Aorta (tissue), 5 donors: ENCODE measurements at regions of chr16 and their contacts with region 1.

Region 1: DNA sequence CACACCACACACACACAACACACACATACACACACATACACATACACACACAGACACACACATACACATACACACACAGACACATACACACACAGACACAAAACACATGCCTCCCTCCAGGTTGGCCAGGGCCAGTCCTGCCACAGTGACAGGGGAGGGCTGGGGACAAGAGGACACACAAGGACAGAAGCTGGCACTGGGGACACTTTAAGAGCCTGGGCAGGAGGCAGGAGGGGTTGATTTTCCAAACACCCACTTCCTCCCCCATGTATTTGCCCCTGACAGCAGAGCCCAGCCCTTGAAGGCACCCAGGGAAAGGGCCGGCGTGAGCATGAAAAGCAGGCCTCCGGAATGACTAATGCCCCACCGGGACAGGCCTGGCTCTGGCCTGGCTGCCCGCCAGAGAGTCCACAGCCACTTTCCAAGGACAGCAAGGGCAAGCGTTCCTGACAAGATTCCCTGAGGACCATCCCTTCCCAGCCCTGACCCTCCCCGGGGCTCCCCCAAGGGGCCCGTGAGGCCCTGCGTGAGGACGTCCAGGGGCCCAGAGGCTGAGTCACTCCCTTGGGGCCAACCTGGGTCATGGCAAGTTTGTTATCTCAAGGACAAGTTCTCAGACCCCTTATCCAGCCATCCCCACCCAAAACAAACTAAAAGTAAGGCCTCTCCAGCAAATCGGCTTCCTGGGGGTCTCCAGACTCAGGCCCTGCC is 235.6 kb downstream of the ZNF423 start:
- DNase-seq: peak; percentile 91 to 95
- ATAC-seq: peak; percentile 86
- H3K4me3 ChIP-seq: no peak overlapping the region
- H3K27ac ChIP-seq: peak overlapping the region; percentile 68 to 86
- H3K4me1 ChIP-seq: peaks cover 0 to 5% of the 10 kb centered on the region in 2 donors
- H3K27me3 ChIP-seq: no peaks in the 10 kb centered on the region

Region 2: GRCh38 chr16:49664221-49665215 is 44.2 kb after region 1 on chr16:
- intact Hi-C with region 1: no loop called
- DNase-seq: peak; percentile 57 to 83
- ATAC-seq: peak; percentile 52
- H3K4me3 ChIP-seq: no peak overlapping the region
- H3K27ac ChIP-seq: peak overlapping the region in 1 of 2 donors; percentile 48
- H3K4me1 ChIP-seq: no peaks in the 10 kb centered on the region
- H3K27me3 ChIP-seq: no peaks in the 10 kb centered on the region

Region 3: GRCh38 chr16:49734331-49734730 is 114.0 kb after region 1 on chr16:
- intact Hi-C with region 1: no loop called
- DNase-seq: no peak
- ATAC-seq: peak; percentile 59
- H3K4me3 ChIP-seq: no peak overlapping the region
- H3K27ac ChIP-seq: no peak overlapping the region
- H3K4me1 ChIP-seq: no peaks in the 10 kb centered on the region
- H3K27me3 ChIP-seq: no peaks in the 10 kb centered on the region

Region 4: DNA sequence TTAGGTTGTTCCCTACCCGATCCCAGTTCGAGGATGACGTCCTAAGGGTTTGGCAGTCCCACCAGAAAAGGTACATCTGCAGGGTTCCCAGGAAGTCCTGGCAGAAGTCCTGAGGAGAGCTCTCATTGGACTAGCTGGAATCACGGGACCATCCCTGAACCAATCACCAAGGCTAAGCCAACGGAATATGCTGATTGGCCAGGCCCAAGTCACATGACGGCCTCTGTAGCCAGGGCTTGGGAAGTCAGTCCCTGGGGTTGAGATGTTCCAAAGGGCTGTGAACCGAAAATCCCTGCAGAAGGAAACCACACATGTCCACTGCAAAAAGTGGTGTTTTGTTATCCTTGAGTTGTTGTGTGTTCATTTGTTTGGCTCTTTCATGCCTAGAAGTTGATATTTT is 303.8 kb after region 1 on chr16:
- intact Hi-C with region 1: no loop called
- DNase-seq: peak in 1 of 2 donors; percentile 27
- ATAC-seq: no peak
- H3K4me3 ChIP-seq: no peak overlapping the region
- H3K27ac ChIP-seq: no peak overlapping the region
- H3K4me1 ChIP-seq: no peaks in the 10 kb centered on the region
- H3K27me3 ChIP-seq: no peaks in the 10 kb centered on the region

Region 5: GRCh38 chr16:50024684-50025536 is 404.6 kb after region 1 on chr16 and contains the start of gene CNEP1R1:
- intact Hi-C with region 1: loop called in 1 of 2 experiments (anchors 10 kb)
- DNase-seq: peak; percentile 96 to 97
- ATAC-seq: peak; percentile 100
- H3K4me3 ChIP-seq: peak within 1 kb of the TSS; percentile 71 to 92
- H3K27ac ChIP-seq: peak within 1 kb of the TSS in 1 of 2 donors; percentile 20
- H3K4me1 ChIP-seq: no peaks in the 10 kb centered on the region
- H3K27me3 ChIP-seq: no peaks in the 10 kb centered on the region
- total RNA-seq, gene CNEP1R1: 25.0 to 25.3 TPM